Activated naive CD4-positive, alpha-beta T cell treated with anti-CD3 and anti-CD28 coated beads for 36 hours (primary cell): ENCODE measurements at regions of chr10 and their contacts with region 1.

Region 1: GRCh38 chr10:79068562-79069324 is at the start of gene ZMIZ1:
- DNase-seq: peak; percentile 85
- H3K4me3 Mint-ChIP-seq: peak within 1 kb of the TSS; percentile 89
- H3K27ac Mint-ChIP-seq: no peak within 1 kb of the TSS
- H3K4me1 Mint-ChIP-seq: peaks cover 27% of the 10 kb centered on the region
- H3K27me3 Mint-ChIP-seq: peaks cover 5% of the 10 kb centered on the region
- total RNA-seq, gene ZMIZ1: 15.6 to 18.3 TPM

Region 2: DNA sequence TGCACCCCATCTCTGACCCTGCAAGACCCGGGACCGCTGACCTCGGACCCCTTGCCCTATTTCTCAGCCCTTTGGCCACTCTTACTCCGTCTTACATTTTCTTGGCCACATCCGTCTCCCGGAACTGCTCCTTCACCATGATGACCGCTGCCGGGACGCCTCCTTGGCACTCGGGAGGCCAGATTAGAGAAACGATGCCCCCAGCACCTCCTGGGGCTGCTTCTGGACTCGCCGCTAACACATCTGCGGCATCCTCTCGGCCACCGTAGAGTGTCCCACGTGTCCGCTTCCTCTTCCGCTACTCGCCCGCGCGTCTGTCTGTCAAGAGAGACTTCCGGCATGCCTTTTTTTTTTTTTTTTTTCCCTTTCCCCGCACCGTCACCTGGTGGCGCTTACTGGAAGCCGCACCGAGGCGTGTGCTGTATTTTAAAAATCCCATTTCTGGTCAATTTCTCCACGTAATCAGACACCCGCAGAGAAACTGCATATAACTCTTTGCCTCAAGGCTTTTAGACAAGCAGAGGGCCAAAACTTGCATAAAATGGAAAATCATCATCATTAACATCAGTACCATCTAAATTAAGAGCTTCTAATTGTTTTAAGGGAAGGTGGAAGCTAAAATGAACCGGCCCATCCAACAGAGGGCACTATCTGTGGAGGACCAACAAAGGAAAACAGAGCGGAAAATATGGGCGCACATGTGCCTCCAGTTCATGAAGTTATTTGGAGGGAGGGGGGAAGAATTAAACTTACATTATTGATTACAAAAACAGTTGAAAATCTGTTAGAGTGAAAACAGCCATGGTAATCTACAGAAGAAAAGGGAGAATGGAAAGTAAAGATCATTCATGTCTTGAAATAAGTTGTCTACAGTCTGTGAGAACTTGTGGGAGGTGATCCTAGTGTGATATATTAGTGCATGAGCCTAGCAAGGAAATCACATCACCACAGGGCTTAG is 1039.2 kb before region 1 on chr10 and contains the start of gene POLR3A:
- CTCF ChIA-PET with region 1: no interaction called
- intact Hi-C with region 1: loop called (anchors 5 kb)
- DNase-seq: peak; percentile 94
- H3K4me3 Mint-ChIP-seq: peak within 1 kb of the TSS; percentile 98
- H3K27ac Mint-ChIP-seq: peak within 1 kb of the TSS; percentile 93
- H3K4me1 Mint-ChIP-seq: peaks cover 38% of the 10 kb centered on the region
- H3K27me3 Mint-ChIP-seq: no peaks in the 10 kb centered on the region
- total RNA-seq, gene POLR3A: 14.1 to 14.2 TPM

Region 3: GRCh38 chr10:78756604-78757349 is 312.0 kb before region 1 on chr10:
- CTCF ChIA-PET with region 1: no interaction called
- intact Hi-C with region 1: loop called (anchors 5 kb)
- DNase-seq: peak; percentile 65
- H3K4me3 Mint-ChIP-seq: no peak overlapping the region
- H3K27ac Mint-ChIP-seq: no peak overlapping the region
- H3K4me1 Mint-ChIP-seq: peaks cover 10% of the 10 kb centered on the region
- H3K27me3 Mint-ChIP-seq: peaks cover 6% of the 10 kb centered on the region

Region 4: GRCh38 chr10:78972947-78973900 is 95.5 kb before region 1 on chr10:
- CTCF ChIA-PET with region 1: no interaction called
- intact Hi-C with region 1: loop called (anchors 1 kb)
- DNase-seq: peak; percentile 80
- H3K4me3 Mint-ChIP-seq: peak overlapping the region; percentile 37
- H3K27ac Mint-ChIP-seq: peak overlapping the region; percentile 8
- H3K4me1 Mint-ChIP-seq: peaks cover 9% of the 10 kb centered on the region
- H3K27me3 Mint-ChIP-seq: no peaks in the 10 kb centered on the region

Region 5: DNA sequence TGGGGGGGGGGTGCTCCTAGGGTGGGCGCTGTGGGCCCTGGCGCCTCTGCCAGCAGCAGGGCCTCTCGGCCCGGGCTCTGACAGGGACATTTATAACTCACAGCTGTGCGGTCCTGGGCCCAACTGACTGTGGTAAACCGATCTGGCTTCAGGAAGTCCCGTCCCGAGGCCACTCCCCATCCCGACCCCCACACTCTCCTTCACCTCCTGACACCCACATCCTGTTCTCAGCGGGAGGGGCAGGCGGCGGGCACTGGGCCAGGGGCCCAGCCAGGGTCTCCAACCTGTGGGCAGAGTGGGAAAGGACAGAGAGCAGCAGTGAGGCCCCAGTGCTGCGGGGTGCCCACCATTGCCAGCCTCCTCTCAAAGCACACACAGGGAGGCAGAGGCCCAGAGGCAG is 69.1 kb after region 1 on chr10:
- CTCF ChIA-PET with region 1: no interaction called
- intact Hi-C with region 1: loop called (anchors 2 kb)
- DNase-seq: peak; percentile 73
- H3K4me3 Mint-ChIP-seq: peak overlapping the region; percentile 41
- H3K27ac Mint-ChIP-seq: no peak overlapping the region
- H3K4me1 Mint-ChIP-seq: peaks cover 26% of the 10 kb centered on the region
- H3K27me3 Mint-ChIP-seq: no peaks in the 10 kb centered on the region

Region 6: GRCh38 chr10:79242620-79243152 is 173.9 kb after region 1 on chr10:
- CTCF ChIA-PET with region 1: no interaction called
- intact Hi-C with region 1: loop called (anchors 2 kb)
- DNase-seq: peak; percentile 69
- H3K4me3 Mint-ChIP-seq: peak overlapping the region; percentile 78
- H3K27ac Mint-ChIP-seq: peak overlapping the region; percentile 56
- H3K4me1 Mint-ChIP-seq: peaks cover 45% of the 10 kb centered on the region
- H3K27me3 Mint-ChIP-seq: no peaks in the 10 kb centered on the region